ENCODE measurements at regions of chr20 and their contacts with region 1.

Region 1: GRCh38 chr20:51385646-51386530 is 156.6 kb downstream of the NFATC2 start:
- DNase-seq: no peak
- H3K4me3 ChIP-seq: no peak overlapping the region
- H3K27ac ChIP-seq: no peak overlapping the region
- H3K4me1 ChIP-seq: peaks cover 2 to 18% (median 10%) of the 10 kb centered on the region in 4 experiments; a peak in 6 of 7 replicates
- H3K27me3 ChIP-seq: no peaks in the 10 kb centered on the region; a peak in 1 of 7 replicates
- CTCF ChIP-seq: peak; percentile 51 to 82 (median 72)
- EP300 ChIP-seq: no peak
- POLR2A ChIP-seq: no peak
- RAD21 ChIP-seq: peak; percentile 74 to 85

Region 2: GRCh38 chr20:51211191-51211590 is 174.7 kb before region 1 on chr20:
- CTCF ChIA-PET with region 1: no interaction called
- POLR2A ChIA-PET with region 1: no interaction called
- DNase-seq: no peak
- H3K4me3 ChIP-seq: no peak overlapping the region
- H3K27ac ChIP-seq: no peak overlapping the region
- H3K4me1 ChIP-seq: no peaks in the 10 kb centered on the region; a peak in 1 of 7 replicates
- H3K27me3 ChIP-seq: no peaks in the 10 kb centered on the region; a peak in 2 of 7 replicates
- CTCF ChIP-seq: no peak
- EP300 ChIP-seq: no peak
- POLR2A ChIP-seq: no peak
- RAD21 ChIP-seq: no peak

Region 3: DNA sequence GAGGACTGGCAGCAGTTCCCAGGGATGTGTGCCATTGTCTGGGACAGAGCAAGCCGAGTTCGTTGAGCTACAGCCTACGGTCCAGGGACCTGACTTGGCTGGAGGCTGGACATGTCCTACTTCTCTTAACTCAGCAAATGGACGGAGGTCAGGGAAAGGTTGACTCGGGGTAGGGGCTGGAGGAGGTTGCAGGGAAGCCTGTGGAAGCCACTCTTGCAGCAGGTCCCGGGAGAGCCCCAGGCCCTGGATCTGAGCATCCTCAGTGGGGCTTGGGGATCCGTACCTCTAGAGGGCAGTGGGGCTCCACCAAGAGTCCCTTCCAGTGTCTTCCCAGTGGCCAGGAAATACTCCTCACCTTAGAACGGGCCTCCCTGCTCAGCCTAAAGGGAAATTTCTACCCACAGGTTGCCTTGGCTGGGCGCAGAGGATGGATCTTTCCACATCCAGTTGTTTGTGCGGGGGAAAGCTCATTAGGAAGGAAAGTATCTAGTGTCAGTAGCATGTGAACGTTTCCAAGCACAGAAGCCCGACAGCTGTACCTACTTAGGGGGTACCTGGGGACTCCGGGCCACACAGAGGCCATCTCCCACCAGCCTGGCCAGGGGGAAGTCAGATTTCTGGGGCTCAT is 13.6 kb before region 1 on chr20:
- CTCF ChIA-PET with region 1: interaction called, 12 read pairs
- POLR2A ChIA-PET with region 1: no interaction called
- DNase-seq: peak; percentile 63 to 85
- H3K4me3 ChIP-seq: no peak overlapping the region
- H3K27ac ChIP-seq: no peak overlapping the region
- H3K4me1 ChIP-seq: peaks cover 2 to 4% (median 2%) of the 10 kb centered on the region in 4 experiments; a peak in 3 of 7 replicates
- H3K27me3 ChIP-seq: no peaks in the 10 kb centered on the region
- CTCF ChIP-seq: peak; percentile 78 to 92 (median 86)
- EP300 ChIP-seq: no peak
- POLR2A ChIP-seq: no peak
- RAD21 ChIP-seq: peak; percentile 96

Region 4: GRCh38 chr20:51412333-51412871 is 26.5 kb after region 1 on chr20:
- CTCF ChIA-PET with region 1: interaction called, 18 read pairs
- POLR2A ChIA-PET with region 1: no interaction called
- DNase-seq: no peak
- H3K4me3 ChIP-seq: no peak overlapping the region
- H3K27ac ChIP-seq: no peak overlapping the region
- H3K4me1 ChIP-seq: peaks cover 3 to 12% (median 9%) of the 10 kb centered on the region in 4 experiments
- H3K27me3 ChIP-seq: no peaks in the 10 kb centered on the region
- CTCF ChIP-seq: no peak
- EP300 ChIP-seq: no peak
- POLR2A ChIP-seq: no peak
- RAD21 ChIP-seq: no peak

Region 5: GRCh38 chr20:51417250-51418136 is 31.6 kb after region 1 on chr20:
- CTCF ChIA-PET with region 1: interaction called, 18 read pairs
- POLR2A ChIA-PET with region 1: no interaction called
- DNase-seq: no peak
- H3K4me3 ChIP-seq: no peak overlapping the region
- H3K27ac ChIP-seq: no peak overlapping the region
- H3K4me1 ChIP-seq: peaks cover 2 to 6% (median 3%) of the 10 kb centered on the region in 4 experiments; a peak in 6 of 7 replicates
- H3K27me3 ChIP-seq: no peaks in the 10 kb centered on the region
- CTCF ChIP-seq: no peak
- EP300 ChIP-seq: no peak
- POLR2A ChIP-seq: no peak
- RAD21 ChIP-seq: no peak

Region 6: GRCh38 chr20:51551186-51551585 is 165.3 kb after region 1 on chr20:
- CTCF ChIA-PET with region 1: interaction called, 12 read pairs
- POLR2A ChIA-PET with region 1: no interaction called
- DNase-seq: no peak
- H3K4me3 ChIP-seq: no peak overlapping the region
- H3K27ac ChIP-seq: no peak overlapping the region
- H3K4me1 ChIP-seq: no peaks in the 10 kb centered on the region
- H3K27me3 ChIP-seq: peaks cover 0 to 13% (median 11%) of the 10 kb centered on the region in 4 experiments; a peak in 4 of 7 replicates
- CTCF ChIP-seq: no peak
- EP300 ChIP-seq: no peak
- POLR2A ChIP-seq: no peak
- RAD21 ChIP-seq: no peak

Region 7: DNA sequence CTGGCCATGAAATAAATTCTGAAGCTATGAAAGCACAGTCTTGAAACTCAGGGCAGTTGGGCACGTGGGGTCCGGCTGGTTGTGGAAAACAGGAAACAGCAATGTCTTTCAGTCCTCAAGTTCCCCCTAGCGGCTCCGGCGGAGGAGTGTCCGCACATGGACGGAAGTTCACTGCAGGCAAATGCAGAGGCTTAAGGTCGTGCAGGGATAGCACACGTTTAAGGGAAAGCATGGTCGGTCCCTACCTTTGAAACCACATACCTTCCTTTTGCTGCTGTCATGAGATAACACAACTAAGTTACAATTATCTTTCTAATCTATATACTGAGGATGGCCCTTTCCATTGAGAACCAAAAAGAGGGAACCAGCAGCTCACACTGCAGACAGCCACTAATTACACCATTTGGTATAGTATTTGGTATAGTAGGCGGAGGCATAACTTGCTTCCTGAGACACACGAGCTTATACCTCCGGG is 209.2 kb after region 1 on chr20:
- CTCF ChIA-PET with region 1: interaction called, 34 read pairs
- POLR2A ChIA-PET with region 1: no interaction called
- DNase-seq: peak; percentile 56 to 81
- H3K4me3 ChIP-seq: no peak overlapping the region
- H3K27ac ChIP-seq: no peak overlapping the region
- H3K4me1 ChIP-seq: peaks cover 0 to 8% (median 2%) of the 10 kb centered on the region in 4 experiments; a peak in 5 of 7 replicates
- H3K27me3 ChIP-seq: no peaks in the 10 kb centered on the region
- CTCF ChIP-seq: peak; percentile 92 to 96 (median 94)
- EP300 ChIP-seq: 0 out of 3 replicates have a peak, but pooled peaks of 1 of the 2 experiments have one; percentile 16
- POLR2A ChIP-seq: no peak
- RAD21 ChIP-seq: peak; percentile 96